ENCODE measurements at regions of chr12 and their contacts with region 1.

Region 1: DNA sequence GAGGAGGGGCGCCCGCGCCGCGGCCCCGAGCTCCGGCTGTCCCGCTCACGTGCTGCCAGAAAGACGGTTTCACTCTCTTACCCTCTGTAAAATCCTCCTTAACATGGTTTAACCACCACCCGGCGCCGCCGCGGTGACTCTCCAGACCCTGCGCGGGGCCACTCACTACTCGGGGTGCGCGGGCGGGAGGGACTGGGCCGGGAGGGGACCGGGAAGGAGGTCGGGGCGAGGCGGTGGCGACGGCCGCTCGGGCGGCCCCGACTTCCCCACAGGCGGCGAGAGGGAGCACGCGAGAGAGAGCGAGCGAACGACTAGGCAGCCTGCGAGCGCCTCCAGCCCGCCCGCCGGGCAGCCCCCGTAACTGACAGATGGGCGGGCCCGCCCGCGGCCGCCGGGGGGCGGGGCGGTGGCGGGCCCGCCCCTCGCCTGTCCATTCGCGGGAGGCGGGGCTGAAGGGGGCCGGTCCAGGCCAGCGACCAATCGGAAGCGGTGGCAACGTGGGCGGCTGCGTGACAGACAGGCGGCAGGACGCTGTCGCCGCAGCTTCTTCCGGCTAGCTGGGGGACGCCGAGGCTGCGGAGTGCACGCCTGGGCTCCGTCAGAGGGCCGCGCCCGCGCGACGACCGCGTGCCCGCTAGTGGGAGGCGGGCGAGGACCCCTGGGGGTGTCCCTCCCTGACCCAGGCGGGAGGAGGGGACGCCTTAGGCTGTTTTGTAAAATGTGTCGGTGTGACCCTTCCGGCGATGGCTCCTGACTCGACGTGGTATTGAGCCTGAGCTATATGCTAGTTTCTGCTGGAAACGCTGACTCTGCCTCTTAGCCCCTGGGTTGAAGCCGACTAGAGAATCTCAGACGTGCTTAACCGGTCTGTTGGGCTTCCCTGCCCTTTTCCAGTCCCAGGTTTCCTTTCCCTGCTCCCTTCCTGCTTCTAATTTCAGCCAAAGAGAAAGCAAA is at the start of gene EEA1:
- DNase-seq: peak; percentile 93 to 100 (median 98)

Region 2: DNA sequence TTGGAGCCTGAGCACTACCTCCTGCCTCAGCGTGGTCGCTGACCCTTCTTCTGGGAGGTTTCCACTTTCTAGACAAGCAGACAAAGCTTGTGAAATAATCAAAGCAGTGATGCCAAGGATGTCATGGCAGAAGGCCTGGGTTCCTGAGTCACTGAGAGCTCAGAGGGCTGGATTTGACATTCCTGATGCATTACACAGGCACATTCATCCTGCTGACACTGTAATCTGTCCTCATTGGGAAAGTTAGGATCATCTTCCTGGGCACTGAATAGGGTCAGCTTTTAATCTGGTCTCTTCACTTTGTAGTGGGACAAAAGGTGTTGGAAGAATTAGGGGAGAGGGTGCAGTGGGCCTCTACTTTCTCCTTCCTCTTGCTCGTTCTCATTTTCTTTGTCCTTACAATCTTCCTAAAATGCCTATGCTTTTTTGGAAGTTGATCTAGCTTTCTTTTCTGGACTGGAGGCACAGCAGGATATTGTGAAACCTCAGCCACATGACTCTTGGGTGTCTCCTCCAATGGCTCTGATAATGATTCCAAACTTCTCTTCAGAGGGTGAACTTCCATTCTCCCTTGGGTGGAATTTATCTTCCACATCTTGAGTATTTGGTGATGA is 29.7 kb before region 1 on chr12:
- intact Hi-C with region 1: no loop called
- DNase-seq: peak in 4 of 10 donors; percentile 6 to 21 (median 16)

Region 3: GRCh38 chr12:93080994-93081797 is 152.0 kb after region 1 on chr12:
- intact Hi-C with region 1: no loop called
- DNase-seq: no peak

Region 4: DNA sequence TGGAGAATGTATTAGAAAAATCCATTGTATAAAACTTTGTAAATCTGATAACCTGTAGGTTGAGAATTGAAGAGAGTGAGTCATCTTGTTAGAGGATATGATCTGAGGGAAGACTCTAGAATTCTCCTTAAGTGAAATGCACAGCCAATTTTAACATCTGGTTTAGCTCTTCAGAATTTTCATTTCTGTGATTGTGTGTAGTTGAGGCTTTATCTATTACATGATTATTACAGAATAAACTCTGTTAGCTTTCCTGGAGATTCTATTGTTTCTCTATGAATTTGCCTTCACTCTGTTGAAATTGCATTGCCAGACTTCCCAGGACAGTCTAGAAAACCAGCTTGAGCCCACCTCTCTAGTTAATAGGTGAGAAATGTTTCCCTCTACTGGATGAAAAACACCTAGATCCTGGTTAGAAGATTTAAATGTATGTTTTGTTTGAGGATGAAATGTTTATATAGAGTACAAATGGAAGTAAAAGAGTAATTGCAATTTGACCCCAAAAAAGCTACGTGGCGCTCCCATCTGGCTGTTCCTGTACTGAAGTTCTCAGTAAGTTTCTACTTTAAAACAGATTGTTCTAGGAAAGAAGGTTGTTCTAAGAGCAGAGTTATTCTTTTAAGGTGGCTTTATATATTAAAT is 451.4 kb after region 1 on chr12:
- intact Hi-C with region 1: loop called (anchors 5 kb)
- DNase-seq: no peak

Measured in posterior cingulate gyrus (tissue), 11 donors.